Right ventricle myocardium inferior (tissue), 1 donor: ENCODE measurements at regions of chr16 and their contacts with region 1.

Region 1: GRCh38 chr16:22297114-22297878 is at the start of gene POLR3E:
- DNase-seq: peak; percentile 100
- ATAC-seq: peak; percentile 97
- total RNA-seq, gene POLR3E: 36.4 TPM

Region 2: DNA sequence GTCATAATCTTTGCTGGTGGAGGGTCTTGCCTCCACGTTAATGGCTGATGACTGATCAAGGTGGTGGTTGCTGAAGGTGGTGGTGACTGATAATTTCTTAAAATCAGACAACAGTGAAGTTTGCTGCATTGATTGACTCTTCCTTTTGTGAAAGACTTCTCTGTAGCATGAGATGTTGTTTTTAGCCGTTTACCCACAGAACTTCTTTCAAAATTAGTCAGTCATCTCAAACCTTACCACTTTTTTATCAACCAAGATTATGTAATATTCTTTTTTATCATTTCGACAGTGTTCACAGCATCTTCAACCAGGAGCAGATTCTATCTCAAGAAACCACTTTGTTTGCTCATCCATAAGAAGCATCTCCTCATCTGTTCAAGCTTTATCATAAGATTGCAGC is 338.2 kb before region 1 on chr16:
- intact Hi-C with region 1: no loop called
- DNase-seq: no peak
- ATAC-seq: no peak

Region 3: GRCh38 chr16:22007509-22008214 is 289.6 kb before region 1 on chr16 and contains the start of gene MOSMO:
- intact Hi-C with region 1: loop called (anchors 5 kb)
- DNase-seq: peak; percentile 88
- ATAC-seq: peak; percentile 95
- total RNA-seq, gene MOSMO: 9.9 TPM